ENCODE measurements at regions of chr17 and their contacts with region 1.

Region 1: DNA sequence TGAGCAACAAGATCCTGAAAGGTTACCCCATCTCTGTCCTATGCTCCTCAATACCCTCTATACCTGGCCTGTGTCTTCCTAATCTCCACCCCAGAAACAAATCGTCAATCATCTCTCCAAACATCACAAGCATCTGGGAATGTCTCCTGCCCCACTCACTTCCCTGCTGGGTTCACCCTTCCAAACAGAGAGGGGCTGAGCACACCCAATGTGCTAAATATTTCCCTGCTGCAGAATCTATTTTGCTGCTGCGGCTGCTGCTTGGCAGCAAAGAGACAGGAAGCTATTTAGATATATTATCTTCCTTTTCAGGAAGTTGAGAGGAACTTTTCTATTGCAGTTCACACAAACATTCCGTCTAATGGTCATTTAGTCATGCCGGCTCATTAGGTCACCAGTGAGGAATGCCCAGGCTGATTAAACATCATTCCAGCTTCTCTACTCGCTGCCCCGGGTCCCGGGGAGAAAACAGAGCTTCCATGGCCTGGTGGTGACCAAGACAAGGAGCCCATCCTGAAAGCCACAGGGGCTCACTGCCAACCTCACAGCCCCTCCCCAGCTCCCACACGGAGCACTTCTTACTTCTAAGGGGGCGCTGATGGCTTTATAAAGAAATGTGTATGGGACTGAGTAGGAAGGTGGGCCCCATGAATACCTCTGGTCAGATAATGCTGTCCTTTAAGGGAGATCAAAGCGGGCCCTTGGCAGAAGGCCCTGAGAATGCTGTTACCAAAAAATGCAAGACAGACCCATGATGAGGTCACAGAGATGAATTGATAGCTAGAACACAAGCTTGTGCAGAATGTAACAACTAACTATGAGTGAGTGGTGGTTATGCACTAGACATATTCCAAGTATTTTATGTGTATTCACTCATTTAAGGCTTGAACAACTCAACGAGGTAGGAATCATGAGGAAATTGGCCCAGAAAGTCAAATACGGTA is 218.3 kb downstream of the SOX9 start:
- DNase-seq: no peak

Region 2: GRCh38 chr17:72191921-72192799 is 147.0 kb before region 1 on chr17:
- intact Hi-C with region 1: loop called (anchors 2 kb)
- DNase-seq: no peak

Region 3: GRCh38 chr17:72297326-72298115 is 41.6 kb before region 1 on chr17:
- intact Hi-C with region 1: loop called (anchors 5 kb)
- DNase-seq: no peak

Region 4: DNA sequence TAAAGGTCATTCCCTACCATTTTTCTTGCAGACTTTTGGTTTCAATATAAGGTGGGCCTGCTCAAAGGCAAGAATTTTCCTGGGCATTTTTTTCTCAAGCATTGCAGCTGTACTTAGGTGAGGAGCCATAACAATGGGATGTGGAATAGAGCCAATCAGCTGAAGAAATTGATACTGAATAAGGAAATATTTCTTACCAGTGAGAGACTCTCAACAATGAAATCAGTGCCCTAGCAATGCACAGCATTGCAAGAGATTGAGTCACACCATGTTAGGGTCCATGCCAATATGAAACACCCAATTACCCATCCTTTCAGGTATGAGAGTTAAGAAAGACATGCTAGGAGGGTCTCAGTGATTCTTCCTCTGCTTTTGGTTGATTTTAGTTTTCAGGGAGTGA is 19.3 kb after region 1 on chr17:
- intact Hi-C with region 1: no loop called
- DNase-seq: no peak

Region 5: GRCh38 chr17:72477495-72477894 is 138.4 kb after region 1 on chr17:
- intact Hi-C with region 1: no loop called
- DNase-seq: no peak

Region 6: DNA sequence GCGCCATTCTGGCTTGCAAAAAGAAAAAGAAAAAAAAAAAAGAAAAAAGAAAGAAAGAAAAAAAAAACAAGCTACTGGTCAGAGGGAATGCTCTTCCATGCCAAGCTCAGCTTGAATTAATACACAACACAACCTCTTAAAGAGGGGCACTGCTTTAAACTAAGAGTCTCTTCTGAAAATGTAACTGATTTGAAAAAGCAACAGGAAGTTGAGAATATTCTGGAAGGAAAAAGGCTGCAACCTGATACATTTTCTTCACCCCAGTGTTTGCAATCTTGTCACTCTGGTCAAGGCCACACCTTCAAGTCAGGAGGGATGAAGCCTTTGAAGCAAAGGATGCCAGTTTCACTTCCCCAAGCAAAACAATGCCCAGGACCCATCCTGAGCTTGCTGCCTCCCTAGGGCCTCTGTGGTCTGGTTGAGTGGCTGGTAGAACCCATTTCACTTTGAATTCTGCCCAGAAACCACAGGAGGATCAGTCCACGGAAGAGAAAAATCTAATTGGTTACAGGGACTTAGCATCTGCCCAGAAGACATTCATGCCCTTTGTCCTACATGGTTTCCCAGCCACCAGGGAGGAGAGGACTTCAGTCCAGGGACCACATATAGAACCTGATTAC is 171.4 kb after region 1 on chr17:
- intact Hi-C with region 1: loop called (anchors 5 kb)
- DNase-seq: no peak

Measured in cardiac septum (tissue), 1 donor.